ENCODE measurements at regions of chr11 and their contacts with region 1.

Region 1: GRCh38 chr11:110429731-110430266 is at the start of gene FDX1:
- DNase-seq: peak; percentile 65 to 73
- H3K4me3 ChIP-seq: peak within 1 kb of the TSS; percentile 89
- H3K27ac ChIP-seq: peak within 1 kb of the TSS; percentile 52
- H3K4me1 ChIP-seq: peaks cover 34% of the 10 kb centered on the region
- H3K27me3 ChIP-seq: no peaks in the 10 kb centered on the region
- CTCF ChIP-seq: no peak
- total RNA-seq, gene FDX1: 10.5 and 11.9 TPM in 2 replicates

Region 2: DNA sequence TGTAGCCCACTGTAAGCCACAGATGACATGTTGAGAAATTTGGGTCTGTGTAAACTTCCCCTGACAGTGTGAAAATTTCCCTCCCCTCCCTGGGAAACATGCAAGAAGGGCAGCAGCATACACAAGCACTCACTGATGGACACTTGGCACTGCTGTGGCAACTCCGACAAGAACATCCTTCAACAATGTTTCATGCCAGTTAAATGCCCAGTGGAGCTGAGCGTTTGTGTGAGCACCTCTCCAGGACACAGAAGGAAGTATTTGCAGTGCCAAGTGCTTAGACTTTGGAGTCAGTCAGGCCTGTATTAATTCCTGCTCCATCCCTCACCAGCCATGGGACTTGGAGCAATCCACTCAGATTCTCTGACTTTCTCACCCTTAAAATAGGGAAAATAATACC is 990.1 kb before region 1 on chr11:
- CTCF ChIA-PET with region 1: no interaction called
- POLR2A ChIA-PET with region 1: no interaction called
- intact Hi-C with region 1: no loop called
- DNase-seq: no peak
- H3K4me3 ChIP-seq: no peak overlapping the region
- H3K27ac ChIP-seq: no peak overlapping the region
- H3K4me1 ChIP-seq: no peaks in the 10 kb centered on the region
- H3K27me3 ChIP-seq: no peaks in the 10 kb centered on the region
- CTCF ChIP-seq: no peak

Region 3: GRCh38 chr11:109946322-109946846 is 483.4 kb before region 1 on chr11:
- CTCF ChIA-PET with region 1: no interaction called
- POLR2A ChIA-PET with region 1: no interaction called
- intact Hi-C with region 1: loop called (anchors 1 kb)
- DNase-seq: peak; percentile 85 to 97
- H3K4me3 ChIP-seq: peak overlapping the region; percentile 61
- H3K27ac ChIP-seq: peak overlapping the region; percentile 94
- H3K4me1 ChIP-seq: peaks cover 11% of the 10 kb centered on the region
- H3K27me3 ChIP-seq: no peaks in the 10 kb centered on the region
- CTCF ChIP-seq: peak; percentile 98

Region 4: GRCh38 chr11:110092515-110093404 is 337.0 kb before region 1 on chr11 and contains the start of gene ZC3H12C:
- CTCF ChIA-PET with region 1: interaction called, 6 read pairs
- POLR2A ChIA-PET with region 1: no interaction called
- intact Hi-C with region 1: loop called (anchors 5 kb)
- DNase-seq: peak; percentile 89
- H3K4me3 ChIP-seq: peak within 1 kb of the TSS; percentile 82
- H3K27ac ChIP-seq: peak within 1 kb of the TSS; percentile 77
- H3K4me1 ChIP-seq: peaks cover 53% of the 10 kb centered on the region
- H3K27me3 ChIP-seq: no peaks in the 10 kb centered on the region
- CTCF ChIP-seq: peak; percentile 24; the same call in 1 of the 2 replicates
- total RNA-seq, gene ZC3H12C: 9.3 and 12.4 TPM in 2 replicates

Region 5: DNA sequence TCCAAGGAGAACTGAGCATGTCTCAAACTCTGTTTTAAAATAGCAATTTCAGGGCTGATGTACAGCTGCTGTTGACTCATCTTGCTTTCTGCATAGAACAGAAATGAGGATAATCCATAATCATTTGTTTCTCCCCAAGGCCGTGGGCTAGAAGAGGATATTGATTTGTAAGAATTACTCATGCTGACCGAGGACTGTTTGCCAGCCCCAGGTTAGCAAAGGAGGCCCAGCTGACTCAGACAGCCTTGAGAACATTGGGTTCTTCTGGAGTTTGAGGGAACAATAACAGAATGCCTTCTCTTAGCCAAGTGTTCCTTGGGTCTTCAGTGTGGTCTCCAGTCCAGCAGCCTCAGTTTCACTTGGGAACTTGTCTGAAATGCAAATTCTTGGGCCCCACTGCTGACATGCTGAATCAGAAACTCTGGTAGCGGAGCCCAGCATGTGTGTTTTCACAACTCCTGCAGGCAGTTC is 244.6 kb before region 1 on chr11:
- CTCF ChIA-PET with region 1: no interaction called
- POLR2A ChIA-PET with region 1: no interaction called
- intact Hi-C with region 1: no loop called
- DNase-seq: peak in 1 of 2 experiments; percentile 55
- H3K4me3 ChIP-seq: no peak overlapping the region
- H3K27ac ChIP-seq: peak overlapping the region; percentile 8
- H3K4me1 ChIP-seq: peaks cover 36% of the 10 kb centered on the region
- H3K27me3 ChIP-seq: no peaks in the 10 kb centered on the region
- CTCF ChIP-seq: no peak

Region 6: DNA sequence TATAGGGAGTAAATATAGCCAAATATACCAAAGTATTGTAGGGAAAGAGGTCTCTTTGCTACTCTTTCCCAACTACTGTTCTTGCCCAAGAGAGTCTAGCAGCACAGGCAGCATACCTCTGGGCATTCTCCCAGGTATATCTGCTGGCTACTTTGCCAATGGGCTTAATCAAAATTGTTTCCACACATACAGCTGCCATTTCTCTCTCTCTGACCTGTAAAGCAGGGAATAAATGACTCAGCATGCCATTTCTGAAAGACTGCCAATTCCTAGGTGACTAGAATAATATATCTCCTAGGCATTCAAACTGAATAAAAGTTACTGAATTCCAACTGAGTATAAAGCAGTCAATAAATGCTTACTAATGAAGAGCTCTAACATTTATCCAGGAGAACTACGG is 178.0 kb before region 1 on chr11:
- CTCF ChIA-PET with region 1: no interaction called
- POLR2A ChIA-PET with region 1: no interaction called
- intact Hi-C with region 1: loop called (anchors 10 kb)
- DNase-seq: peak; percentile 58 to 95
- H3K4me3 ChIP-seq: no peak overlapping the region
- H3K27ac ChIP-seq: peak overlapping the region; percentile 66
- H3K4me1 ChIP-seq: peaks cover 24% of the 10 kb centered on the region
- H3K27me3 ChIP-seq: no peaks in the 10 kb centered on the region
- CTCF ChIP-seq: no peak

Region 7: DNA sequence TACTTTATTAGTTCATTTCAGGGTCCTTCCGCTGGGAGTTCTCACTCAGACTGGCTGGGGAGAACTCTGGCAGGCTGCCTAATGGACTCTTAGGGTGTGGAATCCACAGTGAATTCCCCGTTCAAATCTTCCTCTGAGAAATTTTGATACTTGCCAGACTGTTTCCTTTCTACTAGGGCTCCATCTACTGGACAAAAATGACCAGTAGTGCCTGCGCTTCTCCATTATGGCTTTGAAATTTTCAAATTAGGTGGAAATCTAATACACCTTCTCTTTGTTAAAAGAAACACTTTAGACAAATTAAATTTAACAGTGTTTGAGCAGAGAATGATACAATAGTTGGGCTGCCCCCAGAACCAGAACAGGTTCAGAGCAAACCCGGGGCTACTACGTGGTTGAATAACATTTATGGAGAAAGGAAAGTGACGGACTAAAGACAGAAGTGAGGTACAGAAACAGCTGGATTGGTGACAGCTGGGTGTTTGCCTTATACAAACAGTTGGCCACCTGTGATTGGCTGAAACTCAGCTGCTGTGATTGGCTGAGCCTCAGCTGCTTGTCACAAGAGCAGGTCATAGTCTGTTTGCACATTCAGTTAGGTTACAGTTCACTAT is 53.0 kb before region 1 on chr11:
- CTCF ChIA-PET with region 1: no interaction called
- POLR2A ChIA-PET with region 1: interaction called, 3 read pairs
- intact Hi-C with region 1: loop called (anchors 2 kb)
- DNase-seq: peak; percentile 68 to 72
- H3K4me3 ChIP-seq: no peak overlapping the region
- H3K27ac ChIP-seq: no peak overlapping the region
- H3K4me1 ChIP-seq: peaks cover 25% of the 10 kb centered on the region
- H3K27me3 ChIP-seq: no peaks in the 10 kb centered on the region
- CTCF ChIP-seq: peak; percentile 94

Region 8: DNA sequence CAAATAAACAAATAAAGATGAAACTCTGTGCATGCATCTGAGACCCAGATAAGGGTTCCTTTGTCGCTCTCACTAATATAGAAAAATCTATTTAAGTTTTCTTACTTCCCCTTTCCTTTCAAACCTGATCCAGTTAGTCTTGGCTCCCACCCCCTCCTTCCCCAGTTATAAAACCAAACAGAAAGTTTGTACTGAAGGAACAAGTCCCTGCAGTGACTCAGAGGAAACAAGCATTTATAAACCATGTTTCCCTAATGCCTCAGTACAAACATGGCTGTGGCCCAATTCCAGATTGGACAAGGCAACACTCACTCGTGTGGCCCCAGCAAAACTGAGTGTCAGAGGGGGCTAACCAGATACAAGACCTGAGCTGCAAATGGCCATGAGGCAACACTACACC is 348.0 kb after region 1 on chr11:
- CTCF ChIA-PET with region 1: no interaction called
- POLR2A ChIA-PET with region 1: no interaction called
- intact Hi-C with region 1: no loop called
- DNase-seq: peak in 1 of 2 experiments; percentile 39
- H3K4me3 ChIP-seq: no peak overlapping the region
- H3K27ac ChIP-seq: no peak overlapping the region
- H3K4me1 ChIP-seq: no peaks in the 10 kb centered on the region
- H3K27me3 ChIP-seq: no peaks in the 10 kb centered on the region
- CTCF ChIP-seq: no peak

Region 9: DNA sequence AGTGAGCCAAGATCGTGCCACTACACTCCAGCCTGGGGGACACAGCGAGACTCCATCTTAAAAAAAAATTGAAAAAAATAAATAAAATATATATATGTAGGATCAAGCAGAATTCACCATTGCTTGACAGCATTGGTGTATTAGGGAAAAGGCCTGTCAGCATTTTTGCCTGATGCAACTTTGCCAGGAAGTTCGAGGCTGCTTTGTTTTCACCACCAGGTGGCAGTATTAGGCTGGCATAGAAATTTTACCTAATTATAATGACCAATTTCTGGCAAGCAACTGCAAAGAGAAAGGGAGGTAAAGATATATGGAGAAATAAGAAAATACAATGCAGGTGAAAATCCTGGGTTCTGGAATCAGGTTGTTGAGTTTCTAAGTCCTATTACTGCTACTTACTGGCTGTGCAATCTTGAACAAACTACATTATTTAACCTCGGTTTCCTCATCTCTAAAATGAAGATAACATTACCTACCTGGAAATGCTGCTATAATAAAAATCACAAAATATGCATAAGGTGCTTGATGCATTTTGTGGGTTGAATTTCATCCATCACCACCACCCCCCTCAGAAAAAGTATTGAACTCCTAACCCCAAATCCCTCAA is 1135.4 kb after region 1 on chr11:
- CTCF ChIA-PET with region 1: interaction called, 13 read pairs
- POLR2A ChIA-PET with region 1: no interaction called
- intact Hi-C with region 1: no loop called
- DNase-seq: peak; percentile 60 to 74
- H3K4me3 ChIP-seq: no peak overlapping the region
- H3K27ac ChIP-seq: no peak overlapping the region
- H3K4me1 ChIP-seq: peaks cover 28% of the 10 kb centered on the region
- H3K27me3 ChIP-seq: no peaks in the 10 kb centered on the region
- CTCF ChIP-seq: peak; percentile 93